H1 (cell line): ENCODE measurements at regions of chr6 and their contacts with region 1.

Region 1: DNA sequence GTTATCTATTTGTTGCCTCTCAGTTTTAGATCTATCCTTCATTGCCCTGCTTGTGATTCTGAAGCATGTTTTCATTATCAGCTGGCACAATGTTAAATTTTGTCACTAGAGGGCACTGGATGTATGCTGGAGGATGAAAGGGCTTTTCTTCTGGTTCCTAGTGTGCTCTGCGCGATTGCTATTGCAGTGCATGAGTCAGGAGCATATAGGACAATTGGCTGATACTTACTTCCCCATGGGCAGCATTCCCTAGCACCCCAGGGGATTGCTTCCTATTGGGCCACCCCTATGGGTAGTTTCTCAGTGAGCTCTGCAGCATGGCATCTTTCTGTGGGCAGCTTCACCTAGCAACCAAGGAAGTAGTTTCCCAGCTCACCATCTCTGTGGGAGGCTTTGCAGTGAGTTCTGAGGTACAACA is 280.3 kb upstream of the SYNCRIP start:
- DNase-seq: peak; percentile 27 to 56
- H3K4me3 ChIP-seq: no peak overlapping the region
- H3K27ac ChIP-seq: no peak overlapping the region
- H3K4me1 ChIP-seq: no peaks in the 10 kb centered on the region; a peak in 2 of 7 replicates
- H3K27me3 ChIP-seq: no peaks in the 10 kb centered on the region
- CTCF ChIP-seq: peak in 2 of 3 experiments; percentile 78 to 82; a peak in 3 of 4 replicates
- EP300 ChIP-seq: no peak
- POLR2A ChIP-seq: no peak
- RAD21 ChIP-seq: peak; percentile 98

Region 2: DNA sequence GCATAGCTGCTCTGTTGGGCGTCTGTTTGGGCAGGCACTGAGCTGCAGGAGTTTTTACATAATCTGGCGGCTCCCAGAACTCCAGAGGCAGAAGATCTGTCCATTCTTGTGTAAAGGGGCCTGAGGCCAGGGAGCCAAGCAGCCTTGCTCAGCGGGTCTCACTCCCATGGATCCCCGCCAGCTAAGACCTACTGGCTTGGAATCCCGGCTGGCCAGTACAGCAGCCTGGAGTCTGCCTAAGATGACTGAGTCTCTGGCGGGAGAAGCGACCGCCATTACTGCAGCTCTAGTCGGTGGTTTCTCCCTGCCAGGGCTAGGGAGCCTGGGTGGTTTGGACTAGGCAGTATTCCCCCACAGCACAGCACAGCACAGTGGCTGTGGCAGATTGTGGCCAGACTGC is 12.0 kb before region 1 on chr6:
- CTCF ChIA-PET with region 1: interaction called, 38 read pairs
- POLR2A ChIA-PET with region 1: no interaction called
- DNase-seq: no peak
- H3K4me3 ChIP-seq: no peak overlapping the region
- H3K27ac ChIP-seq: no peak overlapping the region
- H3K4me1 ChIP-seq: no peaks in the 10 kb centered on the region
- H3K27me3 ChIP-seq: no peaks in the 10 kb centered on the region
- CTCF ChIP-seq: no peak
- EP300 ChIP-seq: no peak
- POLR2A ChIP-seq: no peak
- RAD21 ChIP-seq: no peak

Region 3: DNA sequence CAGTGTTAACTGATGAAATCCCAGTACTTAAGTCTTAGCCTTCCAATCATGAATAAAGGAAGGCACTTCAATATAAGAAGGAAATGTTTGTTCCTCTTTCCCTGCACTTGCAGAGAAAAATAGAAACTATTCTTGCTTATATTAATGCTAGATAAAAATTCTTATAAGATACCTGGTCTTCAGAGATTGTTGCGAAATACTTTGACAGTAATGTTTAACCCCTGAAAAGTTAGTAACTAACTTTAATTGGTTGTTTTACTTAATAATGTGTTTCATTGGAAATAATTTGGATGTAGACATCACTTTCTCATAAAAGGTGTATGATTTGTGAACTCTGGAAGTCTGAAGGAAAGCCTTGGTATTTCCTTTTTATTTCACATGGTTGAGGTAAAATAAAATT is 13.9 kb after region 1 on chr6:
- CTCF ChIA-PET with region 1: interaction called, 10 read pairs
- POLR2A ChIA-PET with region 1: no interaction called
- DNase-seq: no peak
- H3K4me3 ChIP-seq: no peak overlapping the region
- H3K27ac ChIP-seq: no peak overlapping the region
- H3K4me1 ChIP-seq: no peaks in the 10 kb centered on the region
- H3K27me3 ChIP-seq: no peaks in the 10 kb centered on the region
- CTCF ChIP-seq: no peak
- EP300 ChIP-seq: no peak
- POLR2A ChIP-seq: no peak
- RAD21 ChIP-seq: no peak

Region 4: DNA sequence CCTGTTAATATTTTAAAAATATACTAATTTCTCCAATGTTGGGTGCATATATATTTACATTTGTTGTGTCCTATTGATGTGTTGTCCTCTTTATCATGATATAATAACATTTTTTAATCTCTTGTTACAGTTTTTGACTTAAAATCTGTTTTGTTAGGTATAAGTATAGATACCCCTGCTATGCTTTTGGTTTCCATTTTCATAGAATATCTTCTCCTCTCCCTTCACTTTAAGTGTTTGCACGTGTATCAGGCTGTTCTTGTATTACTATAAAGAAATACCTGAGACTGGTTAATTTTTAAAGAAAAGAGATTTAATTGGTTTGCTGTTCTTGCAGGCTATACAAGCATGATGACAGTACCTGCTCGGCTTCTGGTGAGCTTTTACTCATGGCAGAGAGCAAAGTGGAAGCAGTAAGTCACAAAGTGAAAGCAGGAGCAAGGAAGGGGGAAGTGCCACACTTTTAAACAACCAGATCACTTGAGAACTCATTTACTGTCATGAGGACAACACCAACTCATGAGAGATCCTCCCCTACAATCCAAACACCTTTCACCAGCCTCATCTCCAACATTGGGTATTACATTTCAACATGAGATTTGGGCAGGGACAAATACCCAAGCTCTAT is 60.1 kb after region 1 on chr6:
- CTCF ChIA-PET with region 1: no interaction called
- POLR2A ChIA-PET with region 1: no interaction called
- DNase-seq: no peak
- H3K4me3 ChIP-seq: no peak overlapping the region
- H3K27ac ChIP-seq: no peak overlapping the region
- H3K4me1 ChIP-seq: no peaks in the 10 kb centered on the region
- H3K27me3 ChIP-seq: no peaks in the 10 kb centered on the region
- CTCF ChIP-seq: no peak
- EP300 ChIP-seq: no peak
- POLR2A ChIP-seq: no peak
- RAD21 ChIP-seq: no peak

Region 5: DNA sequence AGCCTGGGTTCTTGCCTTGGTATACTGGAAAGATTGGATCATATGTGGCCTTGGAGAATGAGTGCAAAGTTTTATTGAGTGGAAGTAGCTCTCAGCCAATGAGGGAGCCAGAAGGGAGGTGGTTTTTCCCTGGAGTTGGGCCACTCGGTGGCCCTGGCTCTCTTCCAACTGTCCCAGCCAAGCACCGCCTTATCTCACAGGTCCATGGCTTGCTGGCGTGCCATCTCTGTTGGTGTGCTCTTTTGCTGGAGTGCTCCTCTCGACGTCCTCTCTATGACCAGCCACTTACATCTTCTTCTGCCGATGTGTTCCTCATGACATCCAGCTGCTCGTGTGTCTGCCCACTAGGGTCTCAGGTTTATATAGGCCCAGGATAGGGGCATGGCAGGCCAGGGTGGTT is 225.6 kb after region 1 on chr6:
- CTCF ChIA-PET with region 1: interaction called, 20 read pairs
- POLR2A ChIA-PET with region 1: no interaction called
- DNase-seq: no peak
- H3K4me3 ChIP-seq: no peak overlapping the region
- H3K27ac ChIP-seq: no peak overlapping the region
- H3K4me1 ChIP-seq: peaks cover 0 to 8% (median 0%) of the 10 kb centered on the region in 4 experiments; a peak in 2 of 7 replicates
- H3K27me3 ChIP-seq: no peaks in the 10 kb centered on the region; a peak in 1 of 7 replicates
- CTCF ChIP-seq: no peak
- EP300 ChIP-seq: no peak
- POLR2A ChIP-seq: no peak
- RAD21 ChIP-seq: no peak